HEK293T (cell line): ENCODE measurements at regions of chr1 and their contacts with region 1.

Region 1: DNA sequence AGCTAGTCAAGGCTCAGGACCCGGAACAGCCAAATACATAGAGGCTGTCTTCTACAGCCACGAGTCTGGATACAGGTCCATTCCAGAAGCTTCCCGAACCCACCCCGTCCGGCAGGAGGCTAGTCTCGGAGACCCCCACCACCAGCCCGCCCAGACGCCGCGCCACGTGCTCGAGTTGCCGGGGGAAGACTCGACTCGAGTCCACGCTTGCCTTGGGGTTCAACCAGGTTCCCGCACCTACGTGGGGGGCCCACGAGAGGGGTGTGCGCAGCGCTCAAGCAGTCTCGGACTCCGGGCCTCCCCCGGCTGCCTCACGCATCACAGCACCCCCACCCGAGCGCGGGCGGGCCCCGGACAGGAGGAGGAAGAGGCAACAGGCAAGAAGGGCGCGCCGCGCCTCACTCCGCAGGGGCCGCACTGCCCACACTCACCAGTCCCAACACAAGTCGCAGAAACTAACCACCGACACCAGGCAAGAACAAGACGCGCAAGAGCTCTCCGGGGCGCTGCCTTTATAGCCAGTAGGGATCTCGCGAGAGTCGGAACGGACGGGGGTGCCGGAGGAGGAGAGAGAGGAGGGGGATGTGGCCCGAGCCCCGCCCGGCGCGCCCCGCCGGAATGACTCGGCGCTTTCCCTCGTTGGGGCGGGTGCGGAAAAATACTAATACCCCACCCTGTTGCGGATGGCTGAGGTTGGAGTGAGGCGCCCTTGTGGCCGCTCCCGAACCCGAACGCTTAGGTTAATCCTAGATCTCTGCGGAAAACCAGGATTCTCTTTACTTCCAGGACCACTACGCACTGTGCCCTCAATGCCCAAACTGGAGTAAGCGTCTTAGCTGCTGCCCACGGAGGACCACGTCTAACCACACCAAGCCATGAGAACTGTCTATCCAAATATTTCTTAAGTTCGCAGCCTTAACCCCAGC is at the start of gene PRDX1:
- DNase-seq: peak; percentile 96

Region 2: DNA sequence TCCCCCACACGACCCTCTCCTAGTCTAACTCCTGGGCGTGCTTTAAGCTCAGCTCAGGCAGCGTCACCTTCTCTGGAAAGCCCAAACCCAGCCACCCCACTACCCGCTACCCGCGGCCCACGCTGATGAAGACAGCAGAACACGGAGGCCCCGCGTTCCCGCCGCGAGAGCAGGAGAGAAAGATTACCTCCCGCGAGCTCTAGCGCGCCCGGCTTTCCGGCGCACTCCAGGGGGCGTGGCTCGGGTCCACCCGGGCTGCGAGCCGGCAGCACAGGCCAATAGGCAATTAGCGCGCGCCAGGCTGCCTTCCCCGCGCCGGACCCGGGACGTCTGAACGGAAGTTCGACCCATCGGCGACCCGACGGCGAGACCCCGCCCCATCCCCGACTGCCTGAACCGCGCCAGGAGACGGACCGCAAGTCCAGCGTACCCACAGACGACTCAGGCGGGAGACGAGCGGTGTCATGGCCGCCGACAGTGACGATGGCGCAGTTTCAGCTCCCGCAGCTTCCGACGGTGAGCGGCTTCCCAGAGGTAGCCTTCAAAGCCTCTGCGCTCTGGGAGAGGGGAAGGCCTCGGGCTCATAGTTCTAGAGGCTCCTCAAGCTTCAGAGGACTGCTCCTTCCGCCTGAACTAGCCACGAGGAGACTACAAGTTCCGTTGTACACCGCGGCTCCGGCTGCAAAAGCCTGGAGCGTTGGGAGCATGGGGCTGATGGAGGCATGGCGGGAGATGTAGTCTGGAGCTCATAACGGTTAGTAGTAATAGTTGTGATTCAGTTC is 181.7 kb before region 1 on chr1 and contains the starts of genes MUTYH and TOE1:
- CTCF ChIA-PET with region 1: no interaction called
- POLR2A ChIA-PET with region 1: interaction called, 17 read pairs
- DNase-seq: peak; percentile 94

Region 3: DNA sequence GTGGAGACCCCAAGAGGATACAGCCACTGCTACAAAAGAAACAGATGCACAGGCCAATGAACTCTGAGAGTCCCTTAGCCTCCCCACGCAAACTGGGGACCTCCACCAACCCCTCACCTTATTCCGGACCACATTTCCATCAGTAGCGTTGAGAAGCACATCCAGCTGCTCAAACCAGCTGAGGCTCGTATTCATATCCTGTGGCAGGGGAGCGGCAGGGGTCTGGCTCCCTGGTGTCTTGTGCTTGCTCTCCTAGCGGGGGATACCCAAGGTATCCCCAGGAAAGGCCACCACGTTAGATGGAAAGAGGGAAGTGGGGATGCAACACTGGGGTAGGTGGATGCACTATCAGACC is 22.3 kb before region 1 on chr1:
- CTCF ChIA-PET with region 1: no interaction called
- POLR2A ChIA-PET with region 1: interaction called, 32 read pairs
- DNase-seq: no peak

Region 4: DNA sequence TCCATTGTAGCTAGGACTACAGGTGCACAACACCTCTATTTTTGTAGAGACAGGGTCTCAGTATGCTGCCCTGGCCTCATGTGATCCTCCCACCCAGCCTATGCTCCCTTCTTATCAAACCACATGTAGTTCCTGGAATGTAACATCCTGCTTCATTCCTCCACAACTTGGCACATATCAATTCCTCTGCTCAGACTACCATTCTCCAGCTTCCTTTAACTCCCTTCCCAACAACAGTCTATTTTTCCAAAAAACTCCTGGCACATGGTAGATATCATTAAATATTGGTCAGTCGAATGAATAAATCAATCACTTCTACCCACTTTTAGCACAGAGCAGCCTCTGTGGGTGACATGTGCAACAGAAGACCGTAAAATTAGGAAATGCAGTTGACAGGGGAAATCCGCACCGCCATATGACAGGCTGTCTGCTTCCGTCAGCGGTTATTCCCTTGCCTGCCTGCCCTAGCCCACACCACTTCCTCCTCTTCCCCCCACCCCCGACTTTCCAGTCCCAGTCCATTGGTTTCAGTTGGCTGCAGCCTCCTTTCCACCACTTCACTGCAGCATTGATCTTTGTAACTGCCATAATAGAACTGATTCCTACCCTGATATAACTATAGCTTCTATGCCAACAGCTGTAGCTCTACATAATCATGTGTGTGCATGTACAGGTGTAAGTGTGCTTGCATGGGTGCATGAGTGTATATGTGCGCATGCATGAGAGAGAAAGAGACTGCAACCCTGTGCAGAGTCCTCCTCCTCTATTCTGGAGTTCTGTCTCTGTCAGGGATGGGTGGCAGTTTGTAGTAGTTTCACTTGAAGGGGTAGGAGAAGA is 22.1 kb after region 1 on chr1:
- CTCF ChIA-PET with region 1: no interaction called
- POLR2A ChIA-PET with region 1: interaction called, 53 read pairs
- DNase-seq: no peak

Region 5: GRCh38 chr1:45557422-45557944 is 35.8 kb after region 1 on chr1:
- CTCF ChIA-PET with region 1: interaction called, 4 read pairs
- POLR2A ChIA-PET with region 1: interaction called, 19 read pairs
- DNase-seq: no peak

Region 6: GRCh38 chr1:45569962-45570581 is 48.4 kb after region 1 on chr1:
- CTCF ChIA-PET with region 1: interaction called, 7 read pairs
- POLR2A ChIA-PET with region 1: interaction called, 40 read pairs
- DNase-seq: peak; percentile 78

Region 7: DNA sequence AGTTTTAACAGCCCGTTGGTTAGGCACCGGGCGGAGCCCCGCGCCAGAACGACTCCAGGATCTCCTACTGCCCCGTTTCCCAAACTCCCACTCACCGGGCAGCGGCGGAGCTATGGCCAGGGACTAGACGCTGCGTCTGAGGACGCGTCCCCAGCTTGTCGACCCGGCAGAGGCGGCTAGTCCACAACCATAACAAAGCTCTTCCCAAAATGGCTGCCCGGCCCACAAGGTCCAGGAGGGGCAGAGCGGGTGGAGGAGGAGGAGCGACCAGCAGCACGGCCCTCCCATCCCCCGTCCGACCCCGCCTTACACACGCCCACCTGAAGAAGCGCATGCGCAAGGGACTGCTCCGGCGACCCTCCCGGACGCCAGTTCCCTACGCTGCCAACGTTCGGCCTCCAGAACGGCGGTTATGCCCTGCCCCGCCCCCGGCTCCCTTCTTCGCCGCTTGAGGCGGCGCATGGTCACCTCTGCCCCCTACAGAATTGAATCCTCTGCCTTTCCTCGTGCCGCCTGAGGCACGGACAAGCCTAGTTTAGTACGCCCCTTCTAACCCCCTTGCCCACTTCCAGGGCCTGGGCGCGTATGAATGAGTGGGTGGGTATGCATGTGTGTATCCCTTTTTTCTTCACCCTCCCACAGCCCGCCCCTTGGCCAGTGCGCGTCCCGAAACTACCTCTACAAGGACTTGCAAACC is 164.8 kb after region 1 on chr1 and contains the start of gene GPBP1L1:
- CTCF ChIA-PET with region 1: no interaction called
- POLR2A ChIA-PET with region 1: interaction called, 16 read pairs
- DNase-seq: peak; percentile 98